ENCODE measurements at regions of chr11 and their contacts with region 1.

Region 1: DNA sequence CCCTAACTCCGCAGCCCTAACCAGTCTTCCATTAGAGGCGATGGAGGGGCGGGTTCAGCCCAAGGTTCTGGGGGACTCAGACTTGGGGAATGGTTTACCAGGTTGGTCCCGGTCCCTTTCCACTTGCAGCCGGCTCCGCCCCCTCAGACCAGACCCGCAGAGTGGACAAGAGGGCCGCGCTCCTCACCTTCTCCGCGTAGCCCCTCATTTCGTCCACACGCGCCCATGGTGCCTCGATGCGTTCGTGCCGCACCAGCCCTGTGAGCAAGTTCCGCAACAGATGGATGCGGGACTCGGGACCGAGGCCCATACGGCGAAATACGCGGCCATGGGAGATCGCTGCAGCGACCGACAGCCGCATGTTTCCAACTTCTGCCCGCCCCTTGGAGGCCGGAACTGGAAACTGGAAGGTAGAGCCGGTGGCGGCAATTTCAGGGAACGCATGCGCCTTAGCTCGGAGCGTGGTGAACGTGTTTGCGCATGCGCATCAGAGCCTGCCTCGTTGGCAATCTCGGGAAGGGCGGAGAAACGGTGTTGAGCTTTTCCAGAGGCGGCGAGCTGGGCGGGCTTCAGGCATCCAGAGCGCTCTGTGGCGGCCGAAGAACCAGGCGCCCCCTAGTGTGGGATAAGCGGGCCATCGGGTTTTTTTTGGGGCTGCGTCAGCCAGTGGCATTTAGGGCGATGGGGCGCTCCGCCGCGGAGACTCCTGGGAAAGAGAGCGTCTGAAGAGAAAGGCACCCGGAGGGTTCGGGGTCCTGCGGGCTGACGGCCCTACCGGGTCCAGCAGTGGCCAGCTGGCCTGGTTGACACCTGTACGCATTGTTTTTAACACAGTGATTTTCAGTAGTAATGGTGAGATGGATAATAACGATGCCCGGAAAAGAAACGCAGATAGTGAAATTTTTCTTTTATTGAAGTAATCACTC is at the start of gene MRPL17:
- DNase-seq: peak; percentile 97
- H3K4me3 Mint-ChIP-seq: peak within 1 kb of the TSS; percentile 99
- H3K27ac Mint-ChIP-seq: peak within 1 kb of the TSS; percentile 68
- H3K4me1 Mint-ChIP-seq: no peaks in the 10 kb centered on the region
- H3K27me3 Mint-ChIP-seq: peaks cover 28% of the 10 kb centered on the region
- CTCF ChIP-seq: peak; percentile 79
- total RNA-seq, gene MRPL17: 78.2 and 84.0 TPM in 2 replicates

Region 2: GRCh38 chr11:6531267-6531752 is 151.9 kb before region 1 on chr11:
- CTCF ChIA-PET with region 1: interaction called, 18 read pairs
- intact Hi-C with region 1: loop called (anchors 1 kb)
- DNase-seq: peak; percentile 45
- H3K4me3 Mint-ChIP-seq: no peak overlapping the region
- H3K27ac Mint-ChIP-seq: no peak overlapping the region
- H3K4me1 Mint-ChIP-seq: no peaks in the 10 kb centered on the region
- H3K27me3 Mint-ChIP-seq: no peaks in the 10 kb centered on the region
- CTCF ChIP-seq: peak; percentile 51

Region 3: GRCh38 chr11:6603287-6604080 is 79.7 kb before region 1 on chr11 and contains the starts of genes ILK and RRP8:
- CTCF ChIA-PET with region 1: interaction called, 10 read pairs
- intact Hi-C with region 1: no loop called
- DNase-seq: peak; percentile 91
- H3K4me3 Mint-ChIP-seq: no peak within 1 kb of the TSS
- H3K27ac Mint-ChIP-seq: no peak within 1 kb of the TSS
- H3K4me1 Mint-ChIP-seq: peaks cover 17% of the 10 kb centered on the region
- H3K27me3 Mint-ChIP-seq: no peaks in the 10 kb centered on the region
- CTCF ChIP-seq: no peak
- total RNA-seq, gene ILK: 85.7 and 87.0 TPM in 2 replicates
- total RNA-seq, gene RRP8: 17.4 and 22.8 TPM in 2 replicates

Region 4: DNA sequence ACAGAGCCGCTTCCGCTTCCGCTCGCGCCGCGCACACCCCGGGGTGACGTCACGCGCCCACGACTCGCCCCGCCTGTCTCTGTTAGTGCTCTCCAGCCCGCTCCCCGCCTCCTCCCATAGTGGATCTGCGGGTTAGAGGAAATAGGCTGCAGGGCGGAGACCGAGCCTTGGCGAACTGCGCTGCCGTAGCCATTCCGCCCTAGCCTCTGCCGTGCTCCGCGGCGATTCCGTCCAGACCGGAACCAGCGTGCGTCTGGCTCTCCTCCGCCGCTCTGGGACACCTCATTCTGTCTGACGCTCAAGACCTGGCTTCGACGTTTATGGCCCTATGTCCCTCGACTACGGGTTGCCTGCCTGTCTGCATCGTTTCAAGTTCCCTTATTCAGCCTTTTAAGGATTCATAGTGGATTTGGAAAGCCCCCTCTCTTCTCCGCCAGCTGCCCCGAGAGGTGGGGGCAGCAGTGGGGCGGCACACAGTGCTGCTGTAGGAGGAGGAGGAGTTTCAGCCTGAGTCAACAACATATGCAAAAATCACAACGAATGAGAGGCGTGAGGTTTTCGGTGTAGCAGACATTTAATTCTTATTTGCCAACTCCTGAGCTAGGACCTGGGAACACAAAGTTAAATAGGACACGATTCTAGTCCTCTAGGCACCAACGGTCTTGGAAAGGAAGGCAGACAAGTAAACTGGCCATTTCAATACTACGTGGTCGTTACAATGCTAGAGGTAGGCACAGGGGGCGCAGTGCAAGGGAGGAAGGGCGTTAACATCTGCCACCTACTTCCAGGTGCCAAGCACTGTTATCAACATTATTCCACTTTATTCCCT is 70.8 kb before region 1 on chr11 and contains the start of gene TAF10:
- CTCF ChIA-PET with region 1: interaction called, 9 read pairs
- intact Hi-C with region 1: loop called (anchors 2 kb)
- DNase-seq: peak; percentile 97
- H3K4me3 Mint-ChIP-seq: no peak within 1 kb of the TSS
- H3K27ac Mint-ChIP-seq: peak within 1 kb of the TSS; percentile 81
- H3K4me1 Mint-ChIP-seq: peaks cover 21% of the 10 kb centered on the region
- H3K27me3 Mint-ChIP-seq: no peaks in the 10 kb centered on the region
- CTCF ChIP-seq: peak; percentile 26
- total RNA-seq, gene TAF10: 175 and 187 TPM in 2 replicates

Region 5: GRCh38 chr11:6979365-6979978 is 296.3 kb after region 1 on chr11:
- CTCF ChIA-PET with region 1: no interaction called
- intact Hi-C with region 1: no loop called
- DNase-seq: no peak
- H3K4me3 Mint-ChIP-seq: no peak overlapping the region
- H3K27ac Mint-ChIP-seq: no peak overlapping the region
- H3K4me1 Mint-ChIP-seq: no peaks in the 10 kb centered on the region
- H3K27me3 Mint-ChIP-seq: no peaks in the 10 kb centered on the region
- CTCF ChIP-seq: no peak

Measured in Calu3 (cell line).